CD14-positive monocyte (primary cell): ENCODE measurements at regions of chr17 and their contacts with region 1.

Region 1: DNA sequence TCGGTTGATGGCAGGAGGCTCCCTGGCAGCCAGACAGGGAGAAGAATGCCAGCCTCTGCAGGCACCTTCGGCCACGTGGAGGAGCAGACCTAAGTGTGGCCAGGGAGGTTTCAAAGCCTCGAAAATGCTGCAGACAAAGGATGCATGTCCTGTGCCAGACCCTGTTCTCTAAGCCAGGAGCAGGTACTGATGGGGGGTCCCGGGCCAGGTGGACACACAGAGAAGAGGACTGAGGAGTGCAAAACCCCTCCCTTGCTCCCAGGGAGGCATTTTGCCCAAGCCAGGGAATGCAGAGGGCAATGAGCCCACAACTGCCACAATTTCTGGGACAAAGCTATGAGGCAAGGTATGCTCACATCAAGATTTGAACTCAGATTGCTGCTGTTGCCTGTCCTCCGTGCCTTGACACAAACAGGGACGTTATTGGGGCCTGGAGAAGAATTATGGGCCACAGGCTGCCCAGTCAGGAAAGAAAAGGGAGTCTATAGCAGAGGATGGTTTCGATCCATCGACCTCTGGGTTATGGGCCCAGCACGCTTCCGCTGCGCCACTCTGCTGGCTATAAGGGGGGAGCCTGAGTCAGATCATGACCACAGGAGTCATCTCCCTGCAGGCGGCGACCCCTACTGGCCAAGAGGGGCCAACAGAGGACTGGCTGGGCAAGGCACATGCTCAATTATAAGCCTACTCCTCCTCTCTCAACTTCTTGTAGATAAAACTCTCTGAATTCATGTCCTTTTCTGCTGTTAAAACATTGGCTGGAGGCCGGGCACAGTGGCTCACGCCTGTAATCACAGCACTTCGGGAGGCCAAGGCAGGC is 25.1 kb upstream of the FOXK2 start:
- DNase-seq: peak; percentile 77 to 90 (median 83)
- H3K4me3 ChIP-seq: no peak overlapping the region
- H3K4me3 Mint-ChIP-seq: peak overlapping the region in 1 of 2 donors; percentile 12
- H3K27ac ChIP-seq: peak overlapping the region; percentile 32 to 44
- H3K27ac Mint-ChIP-seq: peak overlapping the region; percentile 21 to 82 (median 53)
- H3K4me1 ChIP-seq: peaks cover 23 to 30% of the 10 kb centered on the region in 2 donors
- H3K4me1 Mint-ChIP-seq: peaks cover 30% of the 10 kb centered on the region
- H3K27me3 ChIP-seq: no peaks in the 10 kb centered on the region
- H3K27me3 Mint-ChIP-seq: peaks cover 0 to 7% (median 0%) of the 10 kb centered on the region in 3 donors
- CTCF ChIP-seq: peak; percentile 82

Region 2: GRCh38 chr17:82518826-82519810 is 24.7 kb after region 1 on chr17 and contains the start of gene FOXK2:
- intact Hi-C with region 1: loop called in 1 of 2 experiments (anchors 1 kb)
- DNase-seq: peak; percentile 92 to 94 (median 93)
- H3K4me3 ChIP-seq: peak within 1 kb of the TSS; percentile 55 to 86 (median 85)
- H3K4me3 Mint-ChIP-seq: peak within 1 kb of the TSS; percentile 86 to 90
- H3K27ac ChIP-seq: peak within 1 kb of the TSS; percentile 67 to 92
- H3K27ac Mint-ChIP-seq: peak within 1 kb of the TSS; percentile 68 to 93 (median 84)
- H3K4me1 ChIP-seq: peaks cover 26 to 34% of the 10 kb centered on the region in 2 donors
- H3K4me1 Mint-ChIP-seq: peaks cover 27% of the 10 kb centered on the region
- H3K27me3 ChIP-seq: no peaks in the 10 kb centered on the region
- H3K27me3 Mint-ChIP-seq: peaks cover 0 to 2% (median 0%) of the 10 kb centered on the region in 3 donors
- CTCF ChIP-seq: no peak
- polyA plus RNA-seq, gene FOXK2: 3.5 to 18.4 (median 4.7) TPM

Region 3: DNA sequence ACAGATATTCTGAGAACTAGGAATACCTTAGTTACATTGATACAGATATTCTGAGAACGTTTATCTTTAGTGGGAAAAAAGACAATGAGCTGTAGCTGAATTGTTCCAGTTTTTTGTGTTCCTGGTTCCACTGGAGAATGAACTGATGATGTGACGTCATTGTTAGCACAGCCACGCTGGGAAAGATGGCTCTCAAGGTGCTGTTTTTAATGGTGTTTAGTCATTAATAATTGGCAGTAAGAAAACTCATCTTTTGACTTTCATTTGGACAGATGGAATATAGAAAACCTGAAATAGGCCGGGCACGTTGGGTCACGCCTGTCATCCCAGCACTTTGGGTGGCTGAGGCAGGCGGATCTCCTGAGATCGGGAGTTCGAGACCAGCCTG is 35.5 kb after region 1 on chr17:
- intact Hi-C with region 1: no loop called
- DNase-seq: no peak
- H3K4me3 ChIP-seq: no peak overlapping the region
- H3K4me3 Mint-ChIP-seq: no peak overlapping the region
- H3K27ac ChIP-seq: no peak overlapping the region
- H3K27ac Mint-ChIP-seq: peak overlapping the region in 1 of 7 donors; percentile 10
- H3K4me1 ChIP-seq: peaks cover 6 to 13% of the 10 kb centered on the region in 2 donors
- H3K4me1 Mint-ChIP-seq: peaks cover 23% of the 10 kb centered on the region
- H3K27me3 ChIP-seq: no peaks in the 10 kb centered on the region
- H3K27me3 Mint-ChIP-seq: no peaks in the 10 kb centered on the region
- CTCF ChIP-seq: no peak